WTC11 (cell line): ENCODE measurements at regions of chr2 and their contacts with region 1.

Region 1: DNA sequence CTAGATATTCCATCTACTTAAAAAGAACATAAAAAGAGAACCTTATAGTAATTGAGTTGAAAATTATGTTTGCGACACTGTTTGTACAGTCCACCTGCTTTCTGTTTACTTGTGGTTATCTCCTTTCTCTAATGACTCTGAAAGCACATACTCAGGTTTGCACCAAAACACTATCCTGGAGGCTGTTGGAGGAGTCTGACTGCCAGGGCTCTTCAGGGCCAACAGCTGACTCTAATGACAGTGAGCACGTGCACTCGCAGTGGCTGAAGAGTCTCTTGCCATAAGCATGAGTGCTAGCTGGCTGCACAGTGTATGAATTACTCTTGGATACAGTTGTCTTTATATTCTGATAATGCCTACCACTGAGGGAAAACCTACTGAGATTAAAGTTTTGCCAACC is 16.7 kb upstream of the GLS start:
- DNase-seq: no peak
- ATAC-seq: no peak
- H3K4me3 Mint-ChIP-seq: no peak overlapping the region
- H3K27ac Mint-ChIP-seq: no peak overlapping the region
- H3K4me1 Mint-ChIP-seq: peaks cover 47% of the 10 kb centered on the region
- H3K27me3 Mint-ChIP-seq: peaks cover 7% of the 10 kb centered on the region; the same call in 1 of the 2 replicates
- CTCF ChIP-seq: no peak

Region 2: DNA sequence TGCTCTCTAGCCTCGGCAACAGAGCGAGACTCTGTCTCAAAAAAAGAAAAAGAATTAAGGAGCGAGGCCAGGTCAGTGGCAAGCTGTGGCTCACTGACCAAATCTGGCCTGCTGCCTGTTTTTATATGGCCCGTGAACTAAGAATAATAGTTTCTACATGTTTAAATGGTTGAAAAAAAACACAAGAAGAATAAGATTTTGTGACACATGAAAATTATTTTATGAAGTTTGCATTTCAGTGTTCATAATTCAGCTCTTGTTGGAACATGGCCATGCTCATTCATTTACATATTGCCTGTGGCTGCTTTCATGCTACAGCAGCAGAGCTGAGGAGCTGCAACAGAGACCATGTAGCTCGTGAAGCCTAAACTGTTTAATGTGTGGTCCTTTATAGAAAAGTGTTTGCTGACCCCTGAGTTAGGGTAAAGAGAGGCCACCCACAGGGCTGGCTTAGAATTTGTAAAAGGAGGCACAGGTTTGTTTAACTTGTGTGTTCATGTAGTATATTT is 396.3 kb before region 1 on chr2:
- CTCF ChIA-PET with region 1: no interaction called
- POLR2A ChIA-PET with region 1: interaction called, 15 read pairs
- DNase-seq: no peak
- ATAC-seq: peak; percentile 59
- H3K4me3 Mint-ChIP-seq: no peak overlapping the region
- H3K27ac Mint-ChIP-seq: no peak overlapping the region
- H3K4me1 Mint-ChIP-seq: peaks cover 19% of the 10 kb centered on the region
- H3K27me3 Mint-ChIP-seq: no peaks in the 10 kb centered on the region
- CTCF ChIP-seq: no peak